Activated CD8-positive, alpha-beta T cell treated with anti-CD3 and anti-CD28 coated beads for 36 hours (primary cell): ENCODE measurements at regions of chr10 and their contacts with region 1.

Region 1: GRCh38 chr10:132023092-132023811 is 41.5 kb upstream of the BNIP3 start:
- DNase-seq: peak; percentile 84
- ATAC-seq: no peak
- H3K4me3 Mint-ChIP-seq: no peak overlapping the region
- H3K27ac Mint-ChIP-seq: no peak overlapping the region
- H3K4me1 Mint-ChIP-seq: peaks cover 7% of the 10 kb centered on the region
- H3K27me3 Mint-ChIP-seq: peaks cover 26% of the 10 kb centered on the region
- CTCF ChIP-seq: peak; percentile 94

Region 2: DNA sequence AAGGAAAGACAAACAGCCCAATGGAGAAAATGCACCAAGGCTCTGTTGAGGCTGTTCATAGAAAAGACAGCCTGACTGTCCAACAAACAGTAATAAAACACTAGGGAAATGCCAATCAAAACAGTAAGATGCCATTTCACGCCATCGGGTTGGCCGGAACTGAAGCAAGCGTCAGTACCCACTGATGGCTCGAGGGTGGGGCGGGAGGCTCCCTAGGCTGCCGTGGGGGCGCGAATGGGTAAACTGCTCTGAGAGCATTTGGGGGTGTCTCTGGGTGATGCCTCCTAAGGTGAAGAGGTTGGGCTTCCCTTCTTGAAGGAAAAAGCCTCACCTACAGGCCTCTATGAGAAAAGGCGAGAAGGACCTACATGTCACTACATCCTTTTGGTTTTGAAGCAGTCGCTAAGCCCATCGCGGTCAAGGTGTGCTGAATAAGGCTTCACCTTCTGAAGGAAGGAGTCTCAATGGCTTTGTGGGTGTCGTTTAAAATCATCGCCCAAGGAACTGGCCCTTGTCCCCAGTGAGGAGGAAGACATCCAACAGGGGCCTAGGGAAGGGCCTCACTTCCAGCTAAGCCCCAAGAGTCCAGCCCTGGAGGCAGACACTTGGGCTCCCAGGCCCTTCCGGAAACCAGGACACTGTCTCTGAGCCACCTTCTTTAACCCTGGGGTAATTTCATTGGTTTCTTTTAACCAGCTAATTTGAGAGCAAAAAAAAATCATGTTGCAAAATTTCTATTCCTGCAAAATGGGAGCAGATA is 220.9 kb before region 1 on chr10:
- CTCF ChIA-PET with region 1: no interaction called
- POLR2A ChIA-PET with region 1: no interaction called
- intact Hi-C with region 1: no loop called
- DNase-seq: no peak
- ATAC-seq: no peak
- H3K4me3 Mint-ChIP-seq: no peak overlapping the region
- H3K27ac Mint-ChIP-seq: no peak overlapping the region
- H3K4me1 Mint-ChIP-seq: no peaks in the 10 kb centered on the region
- H3K27me3 Mint-ChIP-seq: no peaks in the 10 kb centered on the region
- CTCF ChIP-seq: no peak

Region 3: DNA sequence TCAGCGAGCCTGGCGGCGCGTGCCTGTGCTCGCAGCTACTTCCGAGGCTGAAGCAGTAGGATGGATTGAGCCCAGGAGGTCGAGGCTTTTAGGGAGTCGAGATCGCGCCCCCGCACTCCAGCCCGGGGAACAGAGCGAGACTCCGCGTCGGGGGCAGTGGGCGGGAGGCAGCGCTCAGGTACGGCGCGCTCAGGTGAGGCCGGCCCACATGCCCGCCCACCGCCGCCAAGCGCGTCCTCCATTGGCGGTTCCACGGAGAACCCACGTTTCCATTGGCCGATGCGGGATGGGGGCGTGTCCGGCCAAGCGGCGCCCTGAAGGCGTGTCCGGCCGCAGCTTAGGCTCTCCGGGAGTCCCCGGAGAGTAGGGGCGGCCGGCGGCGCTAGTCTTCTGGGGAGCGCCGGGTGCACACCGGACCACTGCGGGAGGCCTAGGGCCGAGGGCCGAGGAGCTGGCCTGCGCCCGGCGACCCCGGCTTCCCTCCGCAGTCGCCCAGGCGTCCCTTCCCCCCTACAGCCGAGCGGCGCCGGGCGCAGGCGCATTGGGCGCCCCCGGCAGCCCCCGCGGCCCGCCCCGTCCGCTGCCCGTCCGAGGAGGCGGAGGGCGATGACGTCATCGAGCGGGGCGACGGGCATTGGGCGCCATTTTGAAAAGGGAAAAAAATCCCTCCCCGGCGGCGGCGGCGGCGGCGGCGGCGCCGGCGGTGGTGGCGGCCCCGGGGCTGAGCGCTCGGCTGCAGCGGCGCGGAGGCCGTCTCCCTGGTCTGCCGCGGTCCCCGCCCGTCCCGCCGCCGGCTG is 122.7 kb before region 1 on chr10 and contains the start of gene PPP2R2D:
- CTCF ChIA-PET with region 1: interaction called, 12 read pairs
- POLR2A ChIA-PET with region 1: no interaction called
- intact Hi-C with region 1: no loop called
- DNase-seq: peak; percentile 95
- ATAC-seq: peak; percentile 84
- H3K4me3 Mint-ChIP-seq: peak within 1 kb of the TSS; percentile 92
- H3K27ac Mint-ChIP-seq: peak within 1 kb of the TSS; percentile 90
- H3K4me1 Mint-ChIP-seq: peaks cover 58% of the 10 kb centered on the region
- H3K27me3 Mint-ChIP-seq: peaks cover 6% of the 10 kb centered on the region
- CTCF ChIP-seq: no peak
- total RNA-seq, gene PPP2R2D: 31.6 to 32.3 TPM

Region 4: GRCh38 chr10:131943021-131943814 is 80.0 kb before region 1 on chr10:
- CTCF ChIA-PET with region 1: interaction called, 22 read pairs
- POLR2A ChIA-PET with region 1: no interaction called
- intact Hi-C with region 1: no loop called
- DNase-seq: peak; percentile 42
- ATAC-seq: peak; percentile 75
- H3K4me3 Mint-ChIP-seq: no peak overlapping the region
- H3K27ac Mint-ChIP-seq: no peak overlapping the region
- H3K4me1 Mint-ChIP-seq: peaks cover 5% of the 10 kb centered on the region
- H3K27me3 Mint-ChIP-seq: no peaks in the 10 kb centered on the region
- CTCF ChIP-seq: peak; percentile 26

Region 5: GRCh38 chr10:131972474-131973071 is 50.7 kb before region 1 on chr10:
- CTCF ChIA-PET with region 1: interaction called, 12 read pairs
- POLR2A ChIA-PET with region 1: interaction called, 3 read pairs
- intact Hi-C with region 1: no loop called
- DNase-seq: peak; percentile 60
- ATAC-seq: peak; percentile 65
- H3K4me3 Mint-ChIP-seq: peak overlapping the region; percentile 53
- H3K27ac Mint-ChIP-seq: peak overlapping the region; percentile 77
- H3K4me1 Mint-ChIP-seq: peaks cover 76% of the 10 kb centered on the region
- H3K27me3 Mint-ChIP-seq: no peaks in the 10 kb centered on the region
- CTCF ChIP-seq: no peak

Region 6: GRCh38 chr10:132001238-132001972 is 21.8 kb before region 1 on chr10:
- CTCF ChIA-PET with region 1: interaction called, 11 read pairs
- POLR2A ChIA-PET with region 1: no interaction called
- intact Hi-C with region 1: no loop called
- DNase-seq: peak; percentile 19
- ATAC-seq: peak; percentile 61
- H3K4me3 Mint-ChIP-seq: peak overlapping the region; percentile 8
- H3K27ac Mint-ChIP-seq: no peak overlapping the region
- H3K4me1 Mint-ChIP-seq: peaks cover 4% of the 10 kb centered on the region
- H3K27me3 Mint-ChIP-seq: no peaks in the 10 kb centered on the region
- CTCF ChIP-seq: no peak

Region 7: DNA sequence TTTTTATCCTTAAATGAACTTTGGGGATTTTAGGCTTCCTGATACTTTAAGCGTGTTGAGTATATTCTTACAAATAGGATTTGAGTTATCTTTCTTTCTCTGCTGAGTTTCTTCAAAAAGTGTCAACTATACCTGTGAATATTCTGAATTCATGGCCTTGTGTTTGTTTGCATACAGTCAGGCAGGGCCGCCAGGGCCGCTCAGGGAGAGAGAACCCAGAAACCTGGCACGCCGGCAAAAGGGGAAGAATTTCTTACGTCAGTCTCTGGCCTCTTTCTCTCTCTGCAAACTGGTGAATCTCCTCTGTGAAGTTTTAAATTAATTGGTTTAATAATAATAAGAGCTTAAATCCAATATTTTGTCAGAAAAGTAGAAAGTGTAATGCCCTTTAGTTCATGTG is 12.2 kb before region 1 on chr10:
- CTCF ChIA-PET with region 1: interaction called, 20 read pairs
- POLR2A ChIA-PET with region 1: no interaction called
- intact Hi-C with region 1: no loop called
- DNase-seq: no peak
- ATAC-seq: no peak
- H3K4me3 Mint-ChIP-seq: no peak overlapping the region
- H3K27ac Mint-ChIP-seq: no peak overlapping the region
- H3K4me1 Mint-ChIP-seq: no peaks in the 10 kb centered on the region
- H3K27me3 Mint-ChIP-seq: peaks cover 7% of the 10 kb centered on the region
- CTCF ChIP-seq: no peak

Region 8: DNA sequence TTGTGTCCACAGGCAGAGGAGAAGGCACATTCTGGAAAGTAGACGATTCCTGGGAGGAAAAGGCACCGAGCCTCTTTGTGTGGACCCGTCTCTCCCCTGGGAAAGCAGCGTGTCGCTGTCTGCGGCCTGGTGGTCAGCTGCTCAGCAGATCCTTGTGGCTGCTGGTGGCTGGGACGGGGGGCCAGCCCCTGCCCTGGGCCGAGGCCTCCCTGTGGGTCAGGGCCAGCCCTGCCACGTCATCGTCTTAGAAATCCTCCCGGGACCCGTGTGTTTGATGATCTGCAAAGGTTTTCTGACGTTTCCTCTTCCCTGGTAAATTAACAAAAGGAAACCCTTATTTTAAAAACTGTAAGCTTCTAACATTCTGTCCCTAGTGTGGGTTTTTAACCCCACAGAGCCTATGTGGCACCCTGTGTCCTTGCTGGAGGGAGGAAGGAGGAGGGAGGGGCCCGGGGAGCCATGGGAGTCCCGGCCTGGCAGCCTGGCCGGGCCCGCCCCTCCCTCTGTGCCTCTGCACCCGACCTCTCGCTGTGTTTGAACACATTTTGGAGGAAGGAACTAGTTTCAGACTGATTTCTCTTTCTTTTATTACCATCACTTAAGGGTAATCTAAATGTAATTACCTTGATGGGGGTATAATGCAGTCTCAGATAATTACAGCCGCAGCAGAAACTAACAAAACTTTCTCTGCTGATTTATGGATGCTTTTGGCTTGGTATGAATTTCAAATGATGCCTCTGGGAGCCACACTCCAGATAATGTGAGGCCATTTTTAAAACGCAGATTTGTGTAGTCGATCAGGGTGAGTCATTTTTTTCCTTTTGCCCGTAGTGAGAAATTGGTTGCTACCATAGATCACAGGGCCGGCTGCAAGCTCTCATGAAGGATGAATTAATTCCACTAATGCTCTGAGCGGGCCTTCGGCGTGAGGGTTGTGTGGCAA is 677.2 kb after region 1 on chr10:
- CTCF ChIA-PET with region 1: no interaction called
- POLR2A ChIA-PET with region 1: no interaction called
- intact Hi-C with region 1: no loop called
- DNase-seq: no peak
- ATAC-seq: no peak
- H3K4me3 Mint-ChIP-seq: no peak overlapping the region
- H3K27ac Mint-ChIP-seq: no peak overlapping the region
- H3K4me1 Mint-ChIP-seq: peaks cover 6% of the 10 kb centered on the region
- H3K27me3 Mint-ChIP-seq: no peaks in the 10 kb centered on the region
- CTCF ChIP-seq: no peak